Activated naive CD4-positive, alpha-beta T cell treated with anti-CD3 and anti-CD28 coated beads for 36 hours (primary cell): ENCODE measurements at regions of chr7 and their contacts with region 1.

Region 1: DNA sequence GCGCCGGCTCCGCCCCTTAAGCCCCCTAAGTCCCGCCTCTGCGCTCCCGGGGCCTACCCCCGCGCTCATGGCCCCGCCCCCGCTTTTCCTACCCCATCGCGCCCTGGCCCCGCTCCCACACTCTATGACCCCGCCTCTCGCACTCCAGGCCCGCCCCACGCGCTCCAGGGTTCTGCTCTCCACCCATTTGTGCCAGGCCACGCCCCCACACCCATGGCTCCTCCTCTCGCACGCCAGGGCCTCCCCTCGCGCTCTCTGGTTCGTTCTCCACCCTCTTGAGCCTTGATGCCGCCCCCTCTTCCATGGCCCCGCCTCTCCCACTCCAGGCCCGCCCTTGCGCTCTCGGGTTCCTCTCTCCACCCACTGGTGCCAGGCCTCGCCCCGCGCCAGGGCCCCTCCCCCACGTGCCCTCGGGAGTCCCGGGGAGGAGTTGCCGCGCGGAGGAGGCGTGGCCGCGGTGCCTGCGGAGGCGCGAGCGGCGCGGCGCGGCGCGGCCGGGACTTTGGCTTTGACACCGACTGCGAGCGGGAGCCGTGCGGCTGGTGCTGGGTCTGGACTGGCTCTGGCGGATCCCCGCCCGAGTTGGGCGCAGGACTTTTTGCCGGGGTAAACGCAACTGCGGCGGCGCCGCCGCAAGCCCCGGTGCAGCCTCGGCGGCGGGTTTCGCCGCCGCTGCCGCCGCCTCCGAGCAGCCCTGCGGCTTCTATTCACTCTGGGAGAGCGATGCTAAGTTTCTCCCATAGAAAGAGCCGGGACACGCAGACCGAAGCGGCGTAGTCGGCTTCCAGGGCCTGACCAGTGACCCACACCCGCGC is at the start of gene EEPD1:
- DNase-seq: peak; percentile 100
- H3K4me3 Mint-ChIP-seq: peak within 1 kb of the TSS; percentile 72
- H3K27ac Mint-ChIP-seq: no peak within 1 kb of the TSS
- H3K4me1 Mint-ChIP-seq: peaks cover 18% of the 10 kb centered on the region
- H3K27me3 Mint-ChIP-seq: no peaks in the 10 kb centered on the region
- total RNA-seq, gene EEPD1: 0.49 to 0.50 TPM

Region 2: GRCh38 chr7:36115448-36116321 is 37.3 kb before region 1 on chr7:
- CTCF ChIA-PET with region 1: no interaction called
- intact Hi-C with region 1: loop called (anchors 1 kb)
- DNase-seq: peak; percentile 96
- H3K4me3 Mint-ChIP-seq: no peak overlapping the region
- H3K27ac Mint-ChIP-seq: no peak overlapping the region
- H3K4me1 Mint-ChIP-seq: peaks cover 27% of the 10 kb centered on the region
- H3K27me3 Mint-ChIP-seq: peaks cover 8% of the 10 kb centered on the region

Region 3: GRCh38 chr7:36171503-36171902 is 18.5 kb after region 1 on chr7:
- CTCF ChIA-PET with region 1: no interaction called
- intact Hi-C with region 1: no loop called
- DNase-seq: no peak
- H3K4me3 Mint-ChIP-seq: no peak overlapping the region
- H3K27ac Mint-ChIP-seq: no peak overlapping the region
- H3K4me1 Mint-ChIP-seq: peaks cover 5% of the 10 kb centered on the region
- H3K27me3 Mint-ChIP-seq: no peaks in the 10 kb centered on the region

Region 4: GRCh38 chr7:36207451-36208291 is 54.7 kb after region 1 on chr7:
- CTCF ChIA-PET with region 1: no interaction called
- intact Hi-C with region 1: loop called (anchors 5 kb)
- DNase-seq: peak; percentile 32
- H3K4me3 Mint-ChIP-seq: no peak overlapping the region
- H3K27ac Mint-ChIP-seq: no peak overlapping the region
- H3K4me1 Mint-ChIP-seq: peaks cover 30% of the 10 kb centered on the region
- H3K27me3 Mint-ChIP-seq: no peaks in the 10 kb centered on the region

Region 5: GRCh38 chr7:36286226-36286625 is 133.3 kb after region 1 on chr7:
- CTCF ChIA-PET with region 1: no interaction called
- intact Hi-C with region 1: loop called (anchors 1 kb)
- DNase-seq: peak; percentile 71
- H3K4me3 Mint-ChIP-seq: no peak overlapping the region
- H3K27ac Mint-ChIP-seq: peak overlapping the region; percentile 67
- H3K4me1 Mint-ChIP-seq: peaks cover 36% of the 10 kb centered on the region
- H3K27me3 Mint-ChIP-seq: no peaks in the 10 kb centered on the region

Region 6: GRCh38 chr7:36318116-36318515 is 165.2 kb after region 1 on chr7:
- CTCF ChIA-PET with region 1: no interaction called
- intact Hi-C with region 1: no loop called
- DNase-seq: no peak
- H3K4me3 Mint-ChIP-seq: no peak overlapping the region
- H3K27ac Mint-ChIP-seq: no peak overlapping the region
- H3K4me1 Mint-ChIP-seq: no peaks in the 10 kb centered on the region
- H3K27me3 Mint-ChIP-seq: no peaks in the 10 kb centered on the region

Region 7: GRCh38 chr7:36366718-36367560 is 214.0 kb after region 1 on chr7:
- CTCF ChIA-PET with region 1: no interaction called
- intact Hi-C with region 1: loop called (anchors 1 kb)
- DNase-seq: peak; percentile 89
- H3K4me3 Mint-ChIP-seq: peak overlapping the region; percentile 86
- H3K27ac Mint-ChIP-seq: no peak overlapping the region
- H3K4me1 Mint-ChIP-seq: no peaks in the 10 kb centered on the region
- H3K27me3 Mint-ChIP-seq: peaks cover 2% of the 10 kb centered on the region